Left cardiac atrium (tissue), 4 donors: ENCODE measurements at regions of chr2 and their contacts with region 1.

Region 1: GRCh38 chr2:74587664-74588277 is 33.3 kb downstream of the DOK1 start:
- DNase-seq: peak; percentile 63
- ATAC-seq: peak; percentile 92 to 94

Region 2: GRCh38 chr2:74482801-74483674 is 104.7 kb before region 1 on chr2 and contains the starts of genes CCDC142 and TTC31:
- intact Hi-C with region 1: loop called (anchors 2 to 10 kb)
- DNase-seq: peak; percentile 97
- ATAC-seq: peak; percentile 98 to 99
- total RNA-seq, gene CCDC142: 6.8 to 8.8 TPM
- total RNA-seq, gene TTC31: 11.9 TPM

Region 3: DNA sequence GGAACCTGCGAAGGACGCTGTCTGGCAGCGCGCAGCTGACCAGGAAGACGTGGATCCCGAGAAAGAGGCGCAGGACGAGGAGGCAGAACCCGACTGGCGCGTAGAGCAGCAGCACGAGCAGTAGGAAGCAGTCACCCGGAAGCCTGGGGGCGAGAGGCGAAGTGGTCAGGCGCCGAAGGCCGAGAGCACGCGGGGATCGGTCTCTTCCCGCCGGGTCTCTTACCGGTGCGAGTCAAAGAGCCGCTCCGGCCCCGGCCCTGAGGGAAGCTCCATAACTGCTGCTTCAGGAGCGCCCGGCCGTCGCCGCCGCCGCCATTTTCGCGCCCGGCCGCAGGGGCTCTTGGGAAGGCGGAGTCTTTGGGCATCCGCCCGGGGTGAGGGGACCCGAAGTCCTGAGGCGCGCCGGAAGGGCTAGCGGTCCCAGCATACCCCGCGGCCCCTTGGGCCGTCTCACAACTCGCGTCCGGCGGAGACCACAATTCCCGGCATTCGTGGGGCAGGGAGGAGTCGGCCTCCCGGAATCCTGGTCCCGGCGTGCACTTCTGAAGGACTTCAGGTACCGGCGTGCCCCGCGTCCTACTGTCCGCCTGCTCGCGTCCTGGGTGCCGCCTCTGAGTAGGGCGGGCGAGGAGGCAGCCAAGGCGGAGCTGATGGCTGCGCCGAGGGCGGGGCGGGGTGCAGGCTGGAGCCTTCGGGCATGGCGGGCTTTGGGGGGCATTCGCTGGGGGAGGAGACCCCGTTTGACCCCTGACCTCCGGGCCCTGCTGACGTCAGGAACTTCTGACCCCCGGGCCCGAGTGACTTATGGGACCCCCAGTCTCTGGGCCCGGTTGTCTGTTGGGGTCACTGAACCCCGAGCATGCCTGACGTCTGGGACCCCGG is 58.2 kb before region 1 on chr2 and contains the starts of genes AUP1 and HTRA2:
- intact Hi-C with region 1: loop called in 1 of 2 experiments (anchors 5 kb)
- DNase-seq: peak; percentile 99
- ATAC-seq: peak; percentile 95 to 97
- total RNA-seq, gene AUP1: 62.2 to 78.3 TPM
- total RNA-seq, gene HTRA2: 28.7 to 29.3 TPM